Activated CD4-positive, alpha-beta T cell treated with anti-CD3 and anti-CD28 coated beads for 36 hours (primary cell): ENCODE measurements at regions of chr1 and their contacts with region 1.

Region 1: DNA sequence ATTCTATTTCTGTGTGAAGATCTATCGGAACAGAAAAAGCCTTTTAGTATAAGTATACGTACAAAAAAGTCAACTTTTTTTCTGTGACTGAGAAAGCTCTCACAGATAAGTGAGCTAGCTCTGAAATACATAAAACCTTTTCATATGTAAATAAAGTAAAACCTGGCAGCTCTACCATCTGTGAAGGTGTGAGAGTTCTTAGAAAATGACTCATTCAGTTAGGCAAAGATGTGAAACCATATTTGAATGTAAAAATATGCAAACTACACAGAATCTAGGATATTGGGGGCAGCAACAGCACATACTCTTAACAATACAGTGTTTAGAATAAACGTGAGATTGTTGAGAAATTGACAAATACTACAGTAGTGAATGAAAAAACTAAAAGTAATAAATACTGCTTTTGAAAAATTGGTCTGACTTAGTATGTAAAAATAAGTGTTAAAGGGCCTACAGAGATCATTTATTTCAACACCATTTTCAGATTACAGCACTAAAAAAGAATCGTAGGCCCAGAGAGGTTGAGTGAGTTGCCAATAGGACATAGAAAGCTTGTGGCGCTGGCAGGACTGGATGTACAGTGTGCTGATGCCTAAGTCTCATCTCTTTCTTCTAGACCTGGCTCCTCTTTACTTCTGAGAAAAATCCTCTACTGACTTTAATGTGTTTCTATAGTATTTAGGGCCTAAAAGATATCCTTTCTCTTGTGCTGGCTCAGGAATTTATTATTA is 19.8 kb downstream of the ATP6V1G3 start:
- DNase-seq: peak; percentile 23
- ATAC-seq: peak; percentile 60
- H3K4me3 Mint-ChIP-seq: peak overlapping the region; percentile 64
- H3K27ac Mint-ChIP-seq: peak overlapping the region; percentile 90
- H3K4me1 Mint-ChIP-seq: peaks cover 76% of the 10 kb centered on the region
- H3K27me3 Mint-ChIP-seq: no peaks in the 10 kb centered on the region

Region 2: DNA sequence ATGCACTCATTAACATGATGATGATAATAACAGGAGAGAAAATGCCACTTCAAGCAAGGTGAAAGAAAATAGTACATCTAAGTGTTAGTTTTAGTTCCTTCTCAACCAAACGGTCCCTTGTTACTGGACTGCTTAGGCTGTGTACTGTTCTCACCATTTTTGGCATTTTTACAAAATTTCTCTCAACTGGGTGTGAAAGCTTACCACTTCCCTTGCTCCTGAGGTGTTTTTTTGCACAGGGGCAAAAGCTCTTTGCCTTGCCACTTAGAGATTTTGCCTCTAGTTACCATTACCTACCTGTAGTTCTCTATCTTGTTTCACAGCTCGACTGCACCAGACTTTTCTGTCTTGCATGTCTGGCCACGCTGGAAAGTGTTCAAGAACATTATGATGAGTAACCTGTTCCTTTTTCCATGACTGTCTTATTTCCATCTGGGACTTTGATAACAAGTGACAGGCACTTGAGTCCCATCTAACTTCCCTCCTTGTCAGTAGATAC is 353.2 kb before region 1 on chr1:
- CTCF ChIA-PET with region 1: no interaction called
- POLR2A ChIA-PET with region 1: no interaction called
- intact Hi-C with region 1: loop called in 1 of 2 experiments (anchors 5 kb)
- DNase-seq: peak; percentile 42
- ATAC-seq: peak; percentile 18
- H3K4me3 Mint-ChIP-seq: peak overlapping the region; percentile 54
- H3K27ac Mint-ChIP-seq: peak overlapping the region; percentile 93
- H3K4me1 Mint-ChIP-seq: peaks cover 93% of the 10 kb centered on the region
- H3K27me3 Mint-ChIP-seq: no peaks in the 10 kb centered on the region

Region 3: GRCh38 chr1:198465201-198466144 is 55.2 kb before region 1 on chr1:
- CTCF ChIA-PET with region 1: interaction called, 4 read pairs
- POLR2A ChIA-PET with region 1: no interaction called
- intact Hi-C with region 1: loop called in 1 of 2 experiments (anchors 2 kb)
- DNase-seq: no peak
- ATAC-seq: peak; percentile 74
- H3K4me3 Mint-ChIP-seq: no peak overlapping the region
- H3K27ac Mint-ChIP-seq: peak overlapping the region; percentile 58
- H3K4me1 Mint-ChIP-seq: peaks cover 20% of the 10 kb centered on the region
- H3K27me3 Mint-ChIP-seq: no peaks in the 10 kb centered on the region

Region 4: GRCh38 chr1:198584163-198584562 is 63.5 kb after region 1 on chr1:
- CTCF ChIA-PET with region 1: no interaction called
- POLR2A ChIA-PET with region 1: no interaction called
- intact Hi-C with region 1: no loop called
- DNase-seq: no peak
- ATAC-seq: no peak
- H3K4me3 Mint-ChIP-seq: no peak overlapping the region
- H3K27ac Mint-ChIP-seq: no peak overlapping the region
- H3K4me1 Mint-ChIP-seq: peaks cover 3% of the 10 kb centered on the region
- H3K27me3 Mint-ChIP-seq: no peaks in the 10 kb centered on the region

Region 5: DNA sequence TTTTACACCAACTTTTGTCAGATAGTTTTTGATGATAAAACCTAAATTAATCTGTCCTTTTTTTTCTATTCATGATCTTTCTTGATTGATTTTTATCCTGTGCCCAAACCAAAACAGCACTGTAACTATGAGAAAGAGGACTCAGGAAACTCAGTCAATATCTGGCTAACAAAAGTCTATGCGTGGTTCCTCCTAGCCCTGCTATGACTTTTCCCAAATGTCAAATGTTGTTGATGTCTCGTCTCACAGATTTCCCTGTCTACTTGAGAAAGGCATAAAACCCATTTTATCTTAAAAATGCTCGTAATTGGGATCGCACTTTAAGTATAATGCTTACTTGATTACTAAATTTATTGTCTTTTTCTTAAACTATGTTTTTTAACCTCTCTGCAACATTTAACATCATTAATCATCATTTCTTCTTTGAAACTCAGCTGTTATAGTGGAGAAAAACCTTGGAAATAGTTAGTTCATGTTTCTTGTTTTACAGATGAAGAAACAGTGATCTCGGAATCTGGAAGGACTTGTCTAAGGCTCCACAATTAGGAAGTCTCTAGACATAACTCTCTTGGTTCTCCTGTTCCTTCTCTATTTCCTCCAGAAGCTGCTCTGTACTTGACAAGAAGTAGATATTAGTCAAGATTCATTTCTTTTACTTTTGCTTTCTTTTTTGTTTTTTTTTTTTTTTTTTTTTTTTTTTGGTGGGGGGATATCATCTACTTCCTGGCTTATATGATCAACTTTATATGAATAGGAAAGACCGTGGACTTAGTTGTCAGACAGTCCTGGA is 92.0 kb after region 1 on chr1:
- CTCF ChIA-PET with region 1: interaction called, 9 read pairs
- POLR2A ChIA-PET with region 1: no interaction called
- intact Hi-C with region 1: loop called (anchors 2 kb)
- DNase-seq: no peak
- ATAC-seq: peak; percentile 48
- H3K4me3 Mint-ChIP-seq: peak overlapping the region; percentile 77
- H3K27ac Mint-ChIP-seq: peak overlapping the region; percentile 99
- H3K4me1 Mint-ChIP-seq: peaks cover 83% of the 10 kb centered on the region
- H3K27me3 Mint-ChIP-seq: no peaks in the 10 kb centered on the region

Region 6: GRCh38 chr1:198638894-198639635 is 118.4 kb after region 1 on chr1 and contains the start of gene PTPRC:
- CTCF ChIA-PET with region 1: interaction called, 4 read pairs
- POLR2A ChIA-PET with region 1: interaction called, 4 read pairs
- intact Hi-C with region 1: loop called (anchors 1 to 2 kb)
- DNase-seq: no peak
- ATAC-seq: peak; percentile 62
- H3K4me3 Mint-ChIP-seq: peak within 1 kb of the TSS; percentile 87
- H3K27ac Mint-ChIP-seq: peak within 1 kb of the TSS; percentile 99
- H3K4me1 Mint-ChIP-seq: peaks cover 52% of the 10 kb centered on the region
- H3K27me3 Mint-ChIP-seq: no peaks in the 10 kb centered on the region
- total RNA-seq, gene PTPRC: 458 to 564 TPM

Region 7: DNA sequence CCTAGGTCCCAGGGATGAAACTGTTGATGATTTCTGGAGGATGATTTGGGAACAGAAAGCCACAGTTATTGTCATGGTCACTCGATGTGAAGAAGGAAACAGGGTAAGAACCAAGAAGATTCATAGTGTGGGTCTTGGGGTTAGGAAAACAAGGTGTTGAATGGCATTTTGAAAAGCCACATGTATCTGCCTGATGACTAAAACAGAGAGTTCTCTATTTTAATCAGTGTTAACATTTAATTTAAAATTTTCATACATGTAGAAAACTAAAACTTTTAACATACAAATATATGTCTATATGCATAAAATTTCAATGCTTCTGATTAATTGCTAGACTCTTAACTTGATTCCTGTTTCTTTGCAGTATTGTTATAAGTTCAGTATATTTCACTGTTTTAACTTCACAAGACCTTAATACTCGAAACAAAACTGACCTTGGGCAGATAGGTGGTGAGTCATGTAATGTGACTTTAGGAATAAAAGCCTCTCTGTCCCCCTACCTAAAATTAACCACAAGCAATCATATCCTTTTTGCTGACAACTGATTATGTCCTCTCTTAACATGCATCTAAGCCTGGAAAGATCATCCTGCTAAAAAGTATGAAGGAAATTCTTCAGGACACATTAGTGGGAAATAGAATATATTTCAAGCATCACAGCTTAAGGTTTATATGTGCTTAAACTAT is 213.8 kb after region 1 on chr1:
- CTCF ChIA-PET with region 1: no interaction called
- POLR2A ChIA-PET with region 1: no interaction called
- intact Hi-C with region 1: loop called in 1 of 2 experiments (anchors 5 kb)
- DNase-seq: no peak
- ATAC-seq: peak; percentile 85
- H3K4me3 Mint-ChIP-seq: peak overlapping the region; percentile 1
- H3K27ac Mint-ChIP-seq: peak overlapping the region; percentile 42
- H3K4me1 Mint-ChIP-seq: peaks cover 73% of the 10 kb centered on the region
- H3K27me3 Mint-ChIP-seq: no peaks in the 10 kb centered on the region

Region 8: GRCh38 chr1:198903203-198903602 is 382.5 kb after region 1 on chr1:
- CTCF ChIA-PET with region 1: no interaction called
- POLR2A ChIA-PET with region 1: no interaction called
- intact Hi-C with region 1: no loop called
- DNase-seq: peak; percentile 48
- ATAC-seq: peak; percentile 70
- H3K4me3 Mint-ChIP-seq: no peak overlapping the region
- H3K27ac Mint-ChIP-seq: peak overlapping the region; percentile 52
- H3K4me1 Mint-ChIP-seq: peaks cover 28% of the 10 kb centered on the region
- H3K27me3 Mint-ChIP-seq: no peaks in the 10 kb centered on the region

Region 9: GRCh38 chr1:198937231-198938031 is 416.7 kb after region 1 on chr1:
- CTCF ChIA-PET with region 1: no interaction called
- POLR2A ChIA-PET with region 1: no interaction called
- intact Hi-C with region 1: loop called in 1 of 2 experiments (anchors 5 kb)
- DNase-seq: peak; percentile 65
- ATAC-seq: peak; percentile 93
- H3K4me3 Mint-ChIP-seq: no peak overlapping the region
- H3K27ac Mint-ChIP-seq: peak overlapping the region; percentile 85
- H3K4me1 Mint-ChIP-seq: peaks cover 21% of the 10 kb centered on the region
- H3K27me3 Mint-ChIP-seq: no peaks in the 10 kb centered on the region